GM18951 (cell line): ENCODE measurements at regions of chr1 and their contacts with region 1.

Region 1: DNA sequence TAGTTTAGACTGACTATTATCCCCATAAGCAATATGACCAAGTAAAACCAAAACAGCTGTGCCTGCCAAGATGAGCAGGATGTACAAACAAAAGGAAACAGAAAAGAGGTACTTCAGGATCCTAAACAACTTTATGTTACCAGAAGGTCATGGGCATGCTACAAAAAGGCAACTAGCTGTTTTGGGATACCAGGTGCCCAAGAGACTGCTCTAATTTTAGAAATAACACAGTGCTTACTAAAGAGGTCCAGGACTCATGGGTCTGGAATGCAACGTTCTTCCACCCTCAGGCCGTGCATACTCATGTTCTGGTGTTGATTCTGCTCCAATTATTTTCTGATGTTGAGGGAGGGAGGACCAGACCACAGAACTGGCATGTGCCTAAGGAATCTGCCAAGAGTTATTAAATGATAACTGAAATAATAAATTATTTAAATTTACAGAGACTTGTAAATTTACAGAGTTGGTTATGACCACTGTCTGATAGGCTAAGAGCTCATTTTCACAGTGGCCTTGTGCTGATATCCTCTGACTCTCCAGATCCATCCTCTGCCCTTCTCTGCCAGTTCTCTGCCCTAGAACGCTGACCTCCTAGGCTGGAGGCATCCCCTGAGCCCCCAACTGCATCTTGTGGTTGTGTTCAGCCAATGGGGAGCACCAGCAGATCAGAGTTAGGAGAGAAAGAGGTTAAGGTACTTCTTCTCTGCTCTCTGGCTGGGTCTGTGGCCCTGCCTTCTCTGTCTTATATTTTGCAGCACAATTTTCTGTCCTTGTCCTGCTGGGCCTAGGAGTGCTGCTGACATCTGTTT is 37.7 kb upstream of the BCL10 start:
- POLR2A ChIP-seq: no peak

Region 2: DNA sequence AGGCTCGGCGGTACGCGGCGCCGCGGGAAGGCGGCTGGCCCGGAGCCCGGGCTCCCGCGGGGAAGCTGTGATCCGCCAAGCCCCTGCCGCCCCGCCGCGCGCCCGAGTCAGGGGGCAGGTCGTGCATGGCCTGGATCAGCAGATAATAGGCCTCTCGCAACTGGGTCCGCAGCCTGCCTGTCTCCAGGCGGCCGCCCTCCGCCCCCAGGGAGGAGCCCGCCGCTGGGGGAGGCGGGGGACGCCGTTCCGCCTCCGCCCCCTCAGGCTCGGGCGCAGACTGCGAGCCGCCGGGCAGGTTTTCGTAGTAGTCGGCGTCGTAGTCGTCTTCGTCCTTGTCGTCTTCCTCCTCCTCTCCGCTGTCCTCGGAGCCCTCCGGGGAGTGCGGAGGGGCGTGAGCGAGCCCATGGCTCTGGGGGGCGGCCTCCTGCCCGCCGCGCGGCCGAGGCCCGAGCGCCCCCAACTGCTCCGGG is 113.2 kb before region 1 on chr1 and contains the start of gene SYDE2:
- in situ Hi-C with region 1: no loop called
- POLR2A ChIP-seq: peak; percentile 31

Region 3: GRCh38 chr1:85599076-85599491 is 285.0 kb after region 1 on chr1:
- in situ Hi-C with region 1: loop called (anchors 10 kb)
- POLR2A ChIP-seq: no peak

Region 4: DNA sequence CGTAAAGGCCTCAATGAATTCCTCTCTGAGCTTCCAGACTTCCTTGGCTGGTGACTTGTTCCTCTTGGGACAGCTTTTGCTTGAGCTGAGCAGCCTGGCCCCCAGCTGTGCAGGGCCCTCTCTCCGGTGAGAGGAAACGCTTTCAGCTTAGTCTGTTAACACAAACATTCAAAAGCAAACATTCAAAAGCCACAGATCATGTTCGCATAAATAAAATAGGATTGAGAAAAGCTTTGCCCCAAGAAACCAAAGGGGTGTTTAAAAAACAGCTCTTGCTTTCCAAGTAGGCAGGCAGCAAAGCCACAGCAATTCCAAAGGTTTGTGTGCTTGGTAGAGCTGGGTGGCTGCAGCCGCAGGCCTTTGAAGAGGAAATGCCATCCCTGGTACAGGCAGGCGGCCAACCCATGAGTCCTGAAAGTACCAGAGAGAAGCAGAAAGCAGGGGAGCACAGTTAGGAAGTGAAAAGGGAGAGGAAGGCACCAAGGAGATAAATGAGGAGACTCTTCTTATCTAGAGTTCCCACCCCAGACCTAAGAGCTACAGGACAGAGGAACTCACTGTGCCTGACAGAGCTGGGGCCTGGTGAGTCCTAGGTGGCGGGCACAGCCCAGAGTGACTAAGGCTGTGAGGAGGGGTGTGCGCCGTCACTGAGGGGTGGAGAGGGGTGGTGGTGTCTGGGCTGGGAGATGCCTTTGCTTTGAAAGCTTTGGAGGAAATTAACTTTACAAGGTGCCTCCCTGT is 314.9 kb after region 1 on chr1:
- in situ Hi-C with region 1: no loop called
- POLR2A ChIP-seq: no peak